B cell (primary cell): ENCODE measurements at regions of chr19 and their contacts with region 1.

Region 1: DNA sequence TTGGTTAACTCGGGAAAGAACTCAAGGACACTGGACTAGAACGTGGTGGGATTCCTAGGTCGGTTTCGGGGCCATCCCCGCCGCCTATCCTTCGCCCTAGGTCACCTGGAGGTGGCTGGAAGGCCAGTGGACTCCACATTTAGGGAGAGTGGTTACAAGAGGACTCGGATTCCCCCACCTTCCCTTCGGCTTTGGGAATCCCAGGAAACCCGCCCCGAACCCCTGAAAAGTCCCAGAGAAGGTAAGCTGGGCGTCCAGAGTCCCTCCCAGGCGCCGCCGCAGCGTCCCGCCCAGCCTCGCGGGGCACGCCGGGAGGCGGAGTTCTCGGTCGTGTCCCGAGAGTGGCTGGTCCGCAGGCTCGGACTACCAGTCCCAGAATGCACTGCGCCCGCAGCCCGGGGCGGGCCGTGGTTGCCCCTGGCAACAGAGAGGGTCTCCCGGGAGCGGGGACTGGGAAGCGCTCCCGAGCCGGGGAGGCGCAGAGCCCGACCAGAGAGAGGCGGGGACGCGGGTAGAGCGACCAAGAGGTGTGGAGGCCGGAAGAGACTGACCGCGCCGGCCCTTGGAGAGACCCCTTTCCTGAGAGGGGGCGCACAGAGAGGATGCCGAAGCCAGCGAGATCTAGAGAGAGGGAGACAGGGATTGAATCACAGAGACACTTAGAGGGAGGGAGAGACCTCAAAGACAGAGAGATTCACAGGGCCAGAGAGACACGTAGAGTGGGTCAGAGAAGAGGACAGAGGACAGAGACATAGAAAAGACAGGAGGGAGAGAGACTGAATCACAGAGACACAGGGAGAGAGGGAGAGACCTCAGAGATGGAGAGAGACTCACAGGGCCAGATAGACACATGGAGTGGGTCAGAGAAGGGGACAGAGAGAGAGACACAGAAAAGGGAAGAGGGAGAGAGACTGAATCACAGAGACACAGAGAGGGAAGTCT is 2.6 kb upstream of the PRKCG start:
- DNase-seq: peak; percentile 84
- ATAC-seq: peak; percentile 86
- H3K4me3 ChIP-seq: peak overlapping the region; percentile 34 to 65 (median 49)
- H3K4me3 Mint-ChIP-seq: no peak overlapping the region
- H3K27ac ChIP-seq: no peak overlapping the region
- H3K27ac Mint-ChIP-seq: peak overlapping the region; percentile 37
- H3K4me1 ChIP-seq: peaks cover 63 to 74% of the 10 kb centered on the region in 2 donors
- H3K4me1 Mint-ChIP-seq: peaks cover 40% of the 10 kb centered on the region
- H3K27me3 ChIP-seq: peaks cover 0 to 54% (median 43%) of the 10 kb centered on the region in 4 experiments
- H3K27me3 Mint-ChIP-seq: peaks cover 16% of the 10 kb centered on the region
- CTCF ChIP-seq: no peak

Region 2: GRCh38 chr19:53037101-53038097 is 842.0 kb before region 1 on chr19:
- CTCF ChIA-PET with region 1: no interaction called
- POLR2A ChIA-PET with region 1: no interaction called
- intact Hi-C with region 1: no loop called
- DNase-seq: peak; percentile 8
- ATAC-seq: no peak
- H3K4me3 ChIP-seq: peak overlapping the region in 4 of 5 experiments; percentile 31 to 49 (median 41)
- H3K4me3 Mint-ChIP-seq: peak overlapping the region; percentile 24
- H3K27ac ChIP-seq: no peak overlapping the region
- H3K27ac Mint-ChIP-seq: no peak overlapping the region
- H3K4me1 ChIP-seq: peaks cover 0 to 3% of the 10 kb centered on the region in 2 donors
- H3K4me1 Mint-ChIP-seq: no peaks in the 10 kb centered on the region
- H3K27me3 ChIP-seq: peaks cover 0 to 12% (median 0%) of the 10 kb centered on the region in 4 experiments
- H3K27me3 Mint-ChIP-seq: peaks cover 10% of the 10 kb centered on the region
- CTCF ChIP-seq: no peak

Region 3: GRCh38 chr19:53553884-53554791 is 325.3 kb before region 1 on chr19:
- CTCF ChIA-PET with region 1: no interaction called
- POLR2A ChIA-PET with region 1: interaction called, 11 read pairs
- intact Hi-C with region 1: no loop called
- DNase-seq: peak; percentile 96
- ATAC-seq: peak; percentile 81
- H3K4me3 ChIP-seq: peak overlapping the region in 4 of 5 experiments; percentile 66 to 77 (median 69)
- H3K4me3 Mint-ChIP-seq: peak overlapping the region; percentile 92
- H3K27ac ChIP-seq: peak overlapping the region; percentile 95 to 97
- H3K27ac Mint-ChIP-seq: peak overlapping the region; percentile 92
- H3K4me1 ChIP-seq: peaks cover 4 to 18% of the 10 kb centered on the region in 2 donors
- H3K4me1 Mint-ChIP-seq: peaks cover 28% of the 10 kb centered on the region
- H3K27me3 ChIP-seq: no peaks in the 10 kb centered on the region
- H3K27me3 Mint-ChIP-seq: no peaks in the 10 kb centered on the region
- CTCF ChIP-seq: no peak

Region 4: DNA sequence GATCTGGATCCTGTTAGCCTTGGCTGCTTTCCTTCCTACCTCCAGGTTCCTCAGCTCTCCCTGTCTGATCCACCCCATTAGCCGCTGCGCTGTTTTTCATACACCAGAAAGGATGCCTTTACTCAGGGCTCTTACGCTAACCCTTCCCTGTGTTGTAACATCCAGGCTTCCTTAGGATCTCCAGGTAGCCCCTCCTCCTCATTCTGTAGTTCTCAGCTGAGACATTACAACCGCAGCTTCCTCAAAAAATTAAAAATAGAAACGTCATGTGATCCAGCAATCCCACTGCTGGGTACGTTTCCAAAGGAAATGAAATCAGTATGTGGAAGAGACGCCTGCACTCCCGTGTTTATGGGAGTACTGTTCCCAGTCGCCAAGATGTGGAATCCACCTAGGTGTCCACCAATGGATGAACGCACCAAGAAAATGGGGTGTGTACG is 30.2 kb before region 1 on chr19:
- CTCF ChIA-PET with region 1: interaction called, 3 read pairs
- POLR2A ChIA-PET with region 1: no interaction called
- intact Hi-C with region 1: loop called (anchors 1 kb)
- DNase-seq: no peak
- ATAC-seq: no peak
- H3K4me3 ChIP-seq: no peak overlapping the region
- H3K4me3 Mint-ChIP-seq: no peak overlapping the region
- H3K27ac ChIP-seq: no peak overlapping the region
- H3K27ac Mint-ChIP-seq: no peak overlapping the region
- H3K4me1 ChIP-seq: peaks cover 12 to 23% of the 10 kb centered on the region in 2 donors
- H3K4me1 Mint-ChIP-seq: peaks cover 11% of the 10 kb centered on the region
- H3K27me3 ChIP-seq: peaks cover 0 to 29% (median 12%) of the 10 kb centered on the region in 4 experiments
- H3K27me3 Mint-ChIP-seq: peaks cover 32% of the 10 kb centered on the region
- CTCF ChIP-seq: no peak

Region 5: DNA sequence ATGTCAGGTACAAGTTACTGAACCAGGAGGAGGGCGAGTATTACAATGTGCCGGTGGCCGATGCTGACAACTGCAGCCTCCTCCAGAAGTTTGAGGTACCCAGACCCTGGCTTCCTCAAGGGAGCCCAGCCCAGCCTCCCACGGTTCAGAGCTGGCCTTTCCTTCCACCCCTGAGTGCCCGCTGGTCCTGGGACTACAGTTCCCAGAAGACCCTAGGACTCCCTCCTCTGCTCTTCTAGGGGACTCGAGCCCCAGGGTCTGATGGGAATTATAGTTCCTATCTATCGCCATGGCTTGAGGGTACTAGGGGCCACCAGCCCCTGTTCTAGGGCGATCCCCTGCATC is 13.5 kb after region 1 on chr19:
- CTCF ChIA-PET with region 1: no interaction called
- POLR2A ChIA-PET with region 1: no interaction called
- intact Hi-C with region 1: no loop called
- DNase-seq: no peak
- ATAC-seq: no peak
- H3K4me3 ChIP-seq: no peak overlapping the region
- H3K4me3 Mint-ChIP-seq: no peak overlapping the region
- H3K27ac ChIP-seq: no peak overlapping the region
- H3K27ac Mint-ChIP-seq: no peak overlapping the region
- H3K4me1 ChIP-seq: peaks cover 0 to 7% of the 10 kb centered on the region in 2 donors
- H3K4me1 Mint-ChIP-seq: peaks cover 2% of the 10 kb centered on the region
- H3K27me3 ChIP-seq: peaks cover 0 to 26% (median 12%) of the 10 kb centered on the region in 4 experiments
- H3K27me3 Mint-ChIP-seq: peaks cover 35% of the 10 kb centered on the region
- CTCF ChIP-seq: no peak